ENCODE measurements at regions of chr1 and their contacts with region 1.

Region 1: DNA sequence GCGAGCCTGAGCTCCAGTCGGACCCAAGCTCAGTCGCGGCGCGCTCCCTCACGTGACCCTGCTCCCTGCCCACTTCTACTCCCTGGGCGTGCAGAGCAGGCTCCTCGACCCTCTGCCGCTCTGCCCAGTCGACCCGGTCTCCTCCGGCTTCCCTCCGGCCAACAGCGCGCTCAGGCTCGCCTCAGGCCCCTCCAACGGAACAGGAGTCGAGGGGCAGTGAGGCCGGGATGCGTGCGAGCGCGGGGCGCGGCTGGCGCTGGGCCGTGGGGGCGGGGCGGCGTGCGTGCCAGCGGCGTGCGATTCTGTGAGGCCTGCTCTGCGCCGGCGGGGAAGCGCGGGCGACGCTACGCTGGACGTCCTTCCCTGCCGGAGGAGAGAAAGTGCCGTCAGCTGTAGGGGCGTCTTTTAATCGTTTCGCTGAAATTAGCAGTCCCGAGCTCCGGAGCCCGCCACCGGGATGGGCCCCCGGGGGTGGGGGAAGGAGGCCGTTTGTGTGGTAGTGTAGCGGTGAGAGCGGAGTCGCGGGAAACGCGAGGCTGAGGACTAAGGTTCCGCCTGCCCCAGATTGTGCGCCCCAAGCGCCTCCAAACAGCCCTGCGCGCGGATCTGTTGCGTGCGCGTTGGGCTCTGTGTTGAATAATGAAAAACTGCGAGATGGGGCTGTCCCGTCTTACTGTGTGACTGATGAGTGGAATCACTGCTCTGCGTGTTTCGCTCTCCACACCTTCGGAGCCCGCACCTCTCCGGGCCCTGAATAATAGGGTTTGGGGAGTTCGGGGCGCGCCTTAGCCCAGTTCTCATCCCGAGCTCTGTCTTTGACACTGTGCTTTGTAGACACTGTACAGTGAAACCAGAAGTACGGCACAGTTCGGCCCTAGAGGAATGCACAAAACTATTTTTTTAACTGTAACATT is at the start of gene ACBD6:
- DNase-seq: peak; percentile 96
- H3K4me3 Mint-ChIP-seq: peak within 1 kb of the TSS; percentile 97
- H3K27ac Mint-ChIP-seq: peak within 1 kb of the TSS; percentile 97
- H3K4me1 Mint-ChIP-seq: peaks cover 20% of the 10 kb centered on the region
- H3K27me3 Mint-ChIP-seq: peaks cover 5% of the 10 kb centered on the region
- total RNA-seq, gene ACBD6: 49.8 and 54.7 TPM in 2 replicates

Region 2: GRCh38 chr1:180482425-180483275 is 20.0 kb before region 1 on chr1:
- intact Hi-C with region 1: loop called (anchors 2 kb)
- DNase-seq: peak; percentile 72
- H3K4me3 Mint-ChIP-seq: no peak overlapping the region
- H3K27ac Mint-ChIP-seq: no peak overlapping the region
- H3K4me1 Mint-ChIP-seq: peaks cover 16% of the 10 kb centered on the region
- H3K27me3 Mint-ChIP-seq: no peaks in the 10 kb centered on the region

Measured in activated CD4-positive, alpha-beta T cell treated with anti-CD3 and anti-CD28 coated beads, Interleukin-2, amount 10 ng/mL, durations not matched to agents 24 days and 14 days (primary cell).